ENCODE measurements at regions of chr3 and their contacts with region 1.

Region 1: DNA sequence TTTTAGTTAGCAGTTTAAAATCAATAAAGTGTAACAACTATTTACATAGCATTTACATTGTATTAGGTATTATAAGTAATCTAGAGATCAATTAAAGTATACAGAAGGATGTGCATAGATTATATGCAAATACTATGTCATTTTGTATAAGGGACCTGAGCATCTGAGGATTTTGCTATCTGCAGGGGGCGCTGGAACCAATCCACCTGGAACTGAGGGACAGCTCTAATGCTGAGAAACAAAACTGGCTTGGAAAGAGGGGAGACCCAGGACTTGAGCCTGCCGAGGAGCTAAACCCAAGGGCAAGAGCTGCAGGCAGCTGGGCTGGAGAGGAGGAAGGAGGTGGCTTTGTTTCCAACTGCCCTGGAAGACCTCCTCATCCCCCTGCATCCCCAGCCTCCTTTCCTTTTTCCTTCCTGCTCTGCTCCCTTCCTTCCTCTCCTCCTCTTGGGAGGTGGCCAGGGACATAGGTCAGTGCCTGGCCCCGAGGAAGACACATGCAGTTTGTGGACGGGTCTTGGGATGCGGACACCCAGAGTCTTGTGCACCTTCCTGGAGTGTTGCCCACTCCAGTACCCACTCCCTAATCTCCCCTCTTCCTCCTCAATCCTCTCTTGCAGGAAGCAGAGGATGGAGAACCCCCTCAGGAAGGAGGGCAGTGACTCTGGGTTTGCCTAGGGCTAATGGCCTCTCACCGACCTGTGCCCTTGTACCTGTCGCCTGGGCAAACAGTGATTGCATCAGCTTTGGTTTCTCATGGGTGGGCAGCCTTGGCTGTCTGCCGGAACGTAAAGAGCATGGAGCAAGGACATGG is 828 bp upstream of the RTP3 start:
- DNase-seq: peak; percentile 8
- ATAC-seq: peak; percentile 65
- H3K4me3 ChIP-seq: no peak overlapping the region
- H3K27ac ChIP-seq: no peak overlapping the region
- H3K4me1 ChIP-seq: peaks cover 21% of the 10 kb centered on the region
- H3K27me3 ChIP-seq: peaks cover 0 to 3% of the 10 kb centered on the region in 2 experiments; a peak in 1 of 4 replicates
- CTCF ChIP-seq: peak; percentile 39 to 51 (median 47); a peak in 5 of 6 replicates
- EP300 ChIP-seq: no peak
- POLR2A ChIP-seq: no peak
- RAD21 ChIP-seq: peak; percentile 65

Region 2: DNA sequence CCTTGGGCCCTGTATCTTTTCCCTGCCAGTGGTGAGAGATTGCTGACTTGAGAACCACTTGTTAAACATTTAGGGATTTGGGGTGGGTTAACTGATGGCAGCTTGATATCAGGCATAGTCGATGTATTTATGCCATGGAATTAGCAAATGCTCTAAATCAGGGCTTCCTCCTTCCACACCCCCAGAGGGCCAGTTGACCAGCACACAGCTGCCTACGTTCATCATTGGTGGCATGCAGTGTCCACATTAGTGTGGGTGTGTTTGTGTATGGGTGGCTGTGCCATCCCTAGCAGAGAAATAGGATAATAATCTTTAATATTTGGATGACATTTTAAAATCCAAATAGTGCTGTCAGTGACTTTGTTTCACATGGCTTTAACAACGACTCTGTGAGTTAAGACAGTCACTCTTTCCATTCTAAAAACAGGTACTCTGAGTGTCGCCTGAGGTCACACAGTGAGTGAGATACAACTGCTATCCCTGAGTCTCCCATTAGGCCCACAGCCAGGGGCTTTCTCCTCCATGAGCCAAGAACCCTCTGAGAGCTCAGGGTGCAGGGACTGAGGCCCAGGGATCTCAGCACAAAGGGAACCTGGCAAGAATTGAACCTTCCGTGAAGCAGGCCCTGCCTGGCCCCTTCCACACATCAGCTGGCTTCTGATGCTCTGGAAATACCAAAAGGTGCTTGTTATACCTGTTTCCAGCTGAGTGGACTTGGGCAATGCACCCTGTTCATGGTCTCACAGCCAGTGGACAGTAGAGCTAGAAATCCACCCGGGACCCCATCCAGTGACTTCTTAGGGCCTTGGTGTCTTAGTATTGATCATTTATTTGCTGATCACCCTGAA is 28.0 kb before region 1 on chr3:
- CTCF ChIA-PET with region 1: no interaction called
- POLR2A ChIA-PET with region 1: no interaction called
- RAD21 ChIA-PET with region 1: no interaction called
- SMC1A ChIA-PET with region 1: no interaction called
- in situ Hi-C with region 1: no loop called
- intact Hi-C with region 1: no loop called
- DNase-seq: no peak
- ATAC-seq: no peak
- H3K4me3 ChIP-seq: no peak overlapping the region
- H3K27ac ChIP-seq: no peak overlapping the region
- H3K4me1 ChIP-seq: no peaks in the 10 kb centered on the region
- H3K27me3 ChIP-seq: peaks cover 5 to 11% of the 10 kb centered on the region in 2 experiments; a peak in 3 of 4 replicates
- CTCF ChIP-seq: no peak
- EP300 ChIP-seq: no peak
- POLR2A ChIP-seq: no peak
- RAD21 ChIP-seq: no peak

Region 3: DNA sequence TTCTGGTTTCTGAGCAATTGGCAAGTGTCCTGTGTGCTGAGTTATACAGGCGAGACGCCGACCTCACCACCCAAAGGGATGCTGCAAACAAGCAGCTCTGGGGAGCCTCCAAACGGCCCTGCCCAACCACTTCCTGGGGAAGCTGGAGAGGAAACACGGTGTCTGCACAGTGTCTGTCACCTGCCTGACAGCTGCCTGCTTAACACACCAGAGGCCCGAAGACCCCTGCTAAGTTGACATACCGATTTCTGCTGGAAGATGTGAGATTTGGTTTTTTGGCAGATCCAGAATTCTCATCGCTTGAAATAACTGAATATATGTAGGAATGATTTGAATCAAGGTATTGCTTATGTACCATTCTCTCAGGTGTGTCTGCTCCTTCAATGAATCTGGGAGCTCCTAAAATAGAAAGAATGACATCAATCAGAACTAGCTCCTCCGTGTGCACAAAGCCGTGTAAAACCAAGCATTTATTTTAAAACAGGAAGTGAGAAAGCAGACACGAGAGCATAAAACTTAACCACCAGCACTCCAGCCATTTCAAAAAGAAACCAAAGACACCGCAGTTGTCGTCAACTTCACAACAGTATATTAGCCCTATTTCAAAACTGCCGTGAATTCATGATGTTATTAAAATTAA is 42.0 kb after region 1 on chr3:
- CTCF ChIA-PET with region 1: interaction called, 4 read pairs
- POLR2A ChIA-PET with region 1: no interaction called
- RAD21 ChIA-PET with region 1: no interaction called
- SMC1A ChIA-PET with region 1: interaction called, 7 read pairs
- in situ Hi-C with region 1: no loop called
- intact Hi-C with region 1: loop called (anchors 5 kb)
- DNase-seq: peak; percentile 97
- ATAC-seq: peak; percentile 92
- H3K4me3 ChIP-seq: peak overlapping the region; percentile 57; the same call in 1 of the 2 replicates
- H3K27ac ChIP-seq: peak overlapping the region; percentile 90
- H3K4me1 ChIP-seq: peaks cover 39% of the 10 kb centered on the region
- H3K27me3 ChIP-seq: no peaks in the 10 kb centered on the region
- CTCF ChIP-seq: no peak
- EP300 ChIP-seq: peak; percentile 99
- POLR2A ChIP-seq: no peak
- RAD21 ChIP-seq: 0 out of 2 replicates have a peak, but pooled peaks have one; percentile 6

Region 4: DNA sequence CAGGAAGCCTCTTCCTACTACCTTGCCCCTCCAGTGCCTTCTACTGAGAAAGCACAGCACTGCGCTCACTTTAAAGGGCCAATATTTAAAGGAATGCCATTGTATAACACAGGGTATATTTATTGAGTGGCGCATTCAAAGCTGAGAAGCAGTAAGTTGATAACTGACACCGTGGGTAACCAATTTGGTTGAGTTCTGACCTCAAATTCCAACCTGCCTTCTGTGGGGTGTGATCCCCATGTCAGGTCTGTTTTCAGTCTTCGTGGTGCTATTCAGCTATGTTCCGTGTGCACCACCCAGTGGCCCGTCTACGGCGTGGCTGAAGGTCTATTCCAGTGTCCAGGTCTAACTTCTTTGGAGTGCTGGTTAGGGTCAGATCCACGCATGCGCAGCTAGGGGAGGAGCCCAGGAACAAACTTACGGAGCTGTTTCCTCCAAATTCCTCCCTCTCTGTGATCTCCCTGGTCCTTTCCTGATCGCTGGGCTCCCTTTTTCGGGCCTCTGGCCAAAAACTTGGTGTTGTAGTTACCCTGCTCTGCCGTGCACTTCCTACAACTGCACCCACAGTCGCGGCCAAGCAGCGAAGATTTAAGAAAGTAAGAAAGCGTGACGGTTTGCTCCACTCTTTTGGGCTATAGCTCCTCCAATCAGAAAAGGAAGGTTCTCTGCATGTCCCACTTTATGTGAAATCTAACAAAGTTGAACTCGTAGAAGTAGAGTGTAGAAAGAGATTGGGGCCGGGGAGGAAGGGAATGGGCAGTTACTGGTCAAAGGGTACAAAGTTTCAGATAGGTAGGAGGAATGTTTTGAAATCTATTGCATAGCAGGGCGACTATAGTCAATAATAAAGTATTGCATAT is 61.5 kb after region 1 on chr3:
- CTCF ChIA-PET with region 1: interaction called, 27 read pairs
- POLR2A ChIA-PET with region 1: interaction called, 3 read pairs
- RAD21 ChIA-PET with region 1: interaction called, 4 read pairs
- SMC1A ChIA-PET with region 1: interaction called, 10 read pairs
- in situ Hi-C with region 1: no loop called
- intact Hi-C with region 1: loop called (anchors 2 kb)
- DNase-seq: peak; percentile 75
- ATAC-seq: peak; percentile 100
- H3K4me3 ChIP-seq: peak overlapping the region; percentile 66
- H3K27ac ChIP-seq: no peak overlapping the region
- H3K4me1 ChIP-seq: no peaks in the 10 kb centered on the region
- H3K27me3 ChIP-seq: no peaks in the 10 kb centered on the region
- CTCF ChIP-seq: peak; percentile 88 to 95 (median 88)
- EP300 ChIP-seq: no peak
- POLR2A ChIP-seq: no peak
- RAD21 ChIP-seq: peak; percentile 97

Region 5: DNA sequence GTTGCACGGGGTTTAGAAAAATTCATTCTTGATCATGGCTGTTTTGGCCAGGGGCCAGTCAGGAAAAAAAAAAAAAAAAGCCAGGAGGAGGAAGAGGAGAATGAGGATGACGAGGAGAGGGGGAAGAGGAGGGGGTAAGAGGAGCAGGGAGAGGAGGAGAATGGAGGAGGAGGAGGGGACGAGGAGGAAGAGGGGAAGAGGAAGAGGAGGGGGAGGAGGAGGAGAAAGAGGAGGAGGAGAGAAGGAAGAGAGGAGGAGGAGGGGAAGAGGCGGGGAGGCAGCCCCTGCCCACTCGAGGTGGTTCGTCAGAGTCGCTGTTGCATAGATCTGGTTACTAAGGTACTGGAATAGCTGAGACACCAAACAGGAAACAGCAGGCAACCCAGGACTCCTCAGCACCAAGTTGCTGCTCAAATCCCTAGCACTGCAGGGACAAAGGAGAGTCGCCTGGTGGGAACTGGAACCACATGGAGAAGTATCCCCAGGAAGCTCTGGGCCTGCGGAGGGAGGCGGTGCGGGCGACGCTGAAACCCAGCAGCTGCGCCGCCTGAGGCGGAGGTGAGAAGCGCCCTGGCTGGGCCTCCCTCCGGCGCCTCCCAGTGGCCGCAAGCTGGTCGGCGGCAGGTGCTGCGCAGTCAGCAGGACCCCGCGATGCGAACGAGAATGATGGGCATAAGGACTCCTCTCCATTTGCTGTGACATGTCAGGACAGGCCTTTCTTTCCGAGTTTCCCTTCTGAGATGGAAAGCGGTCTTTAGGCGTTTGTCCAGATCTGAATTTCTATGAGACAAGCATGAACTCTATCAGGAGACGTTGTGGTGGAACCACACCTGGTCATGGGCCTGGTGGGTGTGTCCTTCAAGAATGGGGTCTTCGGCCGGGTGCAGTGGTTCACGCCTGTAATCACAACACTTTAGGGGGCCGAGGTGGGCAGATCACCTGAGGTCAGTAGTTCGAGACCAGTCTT is 132.9 kb after region 1 on chr3:
- CTCF ChIA-PET with region 1: interaction called, 207 read pairs
- POLR2A ChIA-PET with region 1: no interaction called
- RAD21 ChIA-PET with region 1: interaction called, 3 read pairs
- SMC1A ChIA-PET with region 1: interaction called, 8 read pairs
- in situ Hi-C with region 1: no loop called
- intact Hi-C with region 1: no loop called
- DNase-seq: peak; percentile 19
- ATAC-seq: peak; percentile 100
- H3K4me3 ChIP-seq: no peak overlapping the region
- H3K27ac ChIP-seq: no peak overlapping the region
- H3K4me1 ChIP-seq: peaks cover 3% of the 10 kb centered on the region; the same call in 1 of the 2 replicates
- H3K27me3 ChIP-seq: no peaks in the 10 kb centered on the region
- CTCF ChIP-seq: peak; percentile 99 to 100 (median 99)
- EP300 ChIP-seq: no peak
- POLR2A ChIP-seq: no peak
- RAD21 ChIP-seq: peak; percentile 66